Transverse colon (tissue), 4 donors: ENCODE measurements at regions of chr3 and their contacts with region 1.

Region 1: DNA sequence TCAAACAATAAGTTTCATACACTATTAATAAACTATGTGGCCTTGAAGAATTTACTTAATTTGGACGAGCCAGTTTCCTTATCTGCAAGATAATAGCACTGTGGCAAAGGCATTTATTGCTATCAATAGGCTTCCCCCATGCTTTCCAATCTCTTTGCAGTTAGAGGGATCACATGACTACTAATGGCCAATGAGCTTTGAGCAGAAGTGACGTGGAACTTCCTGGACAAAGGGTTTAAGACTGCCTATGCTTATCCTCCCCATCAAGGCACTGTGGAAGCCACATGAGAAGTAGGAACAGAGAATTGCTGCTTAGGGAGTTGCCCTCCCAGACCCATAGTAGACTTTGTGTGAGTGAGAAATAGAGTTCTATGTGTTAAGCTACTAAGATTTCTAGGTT is 16.7 kb upstream of the ZMAT3 start:
- DNase-seq: no peak
- H3K4me3 ChIP-seq: no peak overlapping the region
- H3K27ac ChIP-seq: no peak overlapping the region
- H3K4me1 ChIP-seq: no peaks in the 10 kb centered on the region
- H3K27me3 ChIP-seq: no peaks in the 10 kb centered on the region
- CTCF ChIP-seq: no peak
- EP300 ChIP-seq: no peak
- POLR2A ChIP-seq: no peak

Region 2: DNA sequence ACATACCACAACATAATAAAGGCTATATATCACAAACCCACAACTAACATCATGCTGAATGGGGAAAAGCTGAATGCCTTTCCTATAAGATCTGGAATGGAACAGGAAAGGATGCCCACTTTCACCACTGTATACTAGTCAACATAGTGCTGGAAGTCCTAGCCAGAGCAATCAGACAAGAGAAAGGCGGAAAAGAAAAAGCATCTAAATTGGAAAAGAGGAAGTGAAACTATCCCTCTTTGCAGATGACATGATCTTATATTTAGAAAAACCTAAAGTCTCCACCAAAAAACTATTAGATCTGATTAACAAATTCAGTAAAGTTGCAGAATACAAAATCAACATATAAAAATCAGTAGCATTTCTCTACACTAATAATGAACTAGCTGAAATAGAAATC is 45.3 kb after region 1 on chr3:
- in situ Hi-C with region 1: no loop called
- intact Hi-C with region 1: loop called (anchors 10 kb)
- DNase-seq: no peak
- H3K4me3 ChIP-seq: no peak overlapping the region
- H3K27ac ChIP-seq: no peak overlapping the region
- H3K4me1 ChIP-seq: peaks cover 0 to 10% (median 0%) of the 10 kb centered on the region in 4 donors
- H3K27me3 ChIP-seq: peaks cover 6% of the 10 kb centered on the region
- CTCF ChIP-seq: no peak
- EP300 ChIP-seq: no peak
- POLR2A ChIP-seq: no peak